Activated B cell treated with CpG ODN at 0.5 μM for 24 hours (primary cell): ENCODE measurements at regions of chr13 and their contacts with region 1.

Region 1: GRCh38 chr13:48562296-48563066 is 29.6 kb upstream of the RCBTB2 start:
- DNase-seq: no peak
- ATAC-seq: peak; percentile 99
- H3K4me3 Mint-ChIP-seq: no peak overlapping the region
- H3K27ac Mint-ChIP-seq: peak overlapping the region; percentile 57
- H3K4me1 Mint-ChIP-seq: peaks cover 24% of the 10 kb centered on the region
- H3K27me3 Mint-ChIP-seq: peaks cover 59% of the 10 kb centered on the region
- CTCF ChIP-seq: no peak

Region 2: DNA sequence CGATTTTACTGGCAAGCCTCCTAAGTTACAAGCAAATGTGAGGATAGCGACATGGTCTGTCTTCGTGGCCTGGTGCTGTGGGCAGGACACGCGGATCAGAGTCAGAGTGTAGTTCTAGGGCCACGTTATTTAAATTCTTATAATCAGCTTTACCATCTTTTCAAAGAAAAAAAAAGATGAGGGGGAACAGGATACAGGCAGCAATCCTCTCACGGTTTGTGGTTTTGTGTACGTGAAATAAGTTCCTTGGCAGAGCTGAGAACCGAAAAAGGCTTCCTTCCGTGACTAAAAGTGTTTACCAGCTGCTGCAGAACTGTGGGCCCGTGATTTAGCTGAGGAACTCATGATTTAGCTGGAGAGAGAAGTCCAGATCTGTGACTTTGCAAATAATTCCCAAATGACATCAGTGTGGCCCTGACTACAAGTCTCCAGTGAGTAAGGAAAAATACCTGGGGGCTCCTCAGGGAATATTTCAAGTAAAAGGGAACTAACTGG is 56.8 kb before region 1 on chr13:
- CTCF ChIA-PET with region 1: no interaction called
- POLR2A ChIA-PET with region 1: interaction called, 3 read pairs
- intact Hi-C with region 1: loop called (anchors 2 kb)
- DNase-seq: no peak
- ATAC-seq: peak; percentile 85
- H3K4me3 Mint-ChIP-seq: peak overlapping the region; percentile 75
- H3K27ac Mint-ChIP-seq: peak overlapping the region; percentile 59
- H3K4me1 Mint-ChIP-seq: peaks cover 55% of the 10 kb centered on the region
- H3K27me3 Mint-ChIP-seq: peaks cover 20% of the 10 kb centered on the region
- CTCF ChIP-seq: no peak